ENCODE measurements at regions of chr2 and their contacts with region 1.

Region 1: DNA sequence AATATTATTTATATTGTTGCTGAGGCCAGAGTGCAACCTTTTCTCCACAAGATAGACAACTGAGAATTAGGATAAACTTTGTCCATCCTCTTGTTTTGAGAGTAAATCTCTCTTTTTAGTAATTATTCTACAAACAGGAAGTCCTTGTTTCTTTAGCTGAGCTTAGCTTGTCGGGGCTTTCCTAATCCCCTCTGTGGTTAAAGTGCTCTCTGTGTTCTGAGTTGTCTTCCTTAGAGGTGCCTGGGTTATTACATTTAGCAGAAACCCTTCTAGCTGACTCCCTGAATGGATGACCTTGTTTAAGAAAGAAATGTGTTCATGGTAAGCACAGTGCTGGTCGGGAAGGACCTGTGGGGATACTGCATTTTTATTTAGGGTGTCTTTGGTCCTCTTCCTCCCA is 12.7 kb downstream of the USP39 start:
- DNase-seq: no peak
- H3K4me3 ChIP-seq: no peak overlapping the region
- H3K27ac ChIP-seq: no peak overlapping the region
- H3K4me1 ChIP-seq: no peaks in the 10 kb centered on the region
- H3K27me3 ChIP-seq: no peaks in the 10 kb centered on the region
- CTCF ChIP-seq: no peak
- EP300 ChIP-seq: no peak
- POLR2A ChIP-seq: no peak
- RAD21 ChIP-seq: no peak

Region 2: GRCh38 chr2:85642725-85643124 is 14.1 kb after region 1 on chr2:
- CTCF ChIA-PET with region 1: interaction called, 34 read pairs
- POLR2A ChIA-PET with region 1: interaction called, 11 read pairs
- DNase-seq: no peak
- H3K4me3 ChIP-seq: no peak overlapping the region
- H3K27ac ChIP-seq: no peak overlapping the region
- H3K4me1 ChIP-seq: no peaks in the 10 kb centered on the region
- H3K27me3 ChIP-seq: no peaks in the 10 kb centered on the region
- CTCF ChIP-seq: no peak
- EP300 ChIP-seq: no peak
- POLR2A ChIP-seq: no peak
- RAD21 ChIP-seq: no peak

Region 3: DNA sequence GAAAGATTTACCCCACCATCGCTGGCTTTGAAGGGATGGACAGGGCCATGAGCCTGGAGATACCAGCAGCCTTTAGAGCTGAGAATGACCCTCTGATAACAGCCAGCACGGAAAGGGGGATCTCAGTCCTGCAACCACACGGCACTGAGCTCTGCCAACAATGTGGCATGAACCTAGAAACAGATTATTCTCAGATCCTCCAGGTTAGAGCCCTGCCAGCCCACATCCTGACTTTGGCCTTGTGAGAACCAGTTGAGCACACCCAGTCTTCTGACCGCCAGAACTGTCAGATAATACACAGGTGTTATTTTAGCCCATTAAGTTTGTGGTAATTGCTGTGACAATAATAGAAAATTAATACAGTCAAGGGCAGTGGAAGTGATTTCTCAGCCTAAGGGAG is 56.1 kb after region 1 on chr2:
- CTCF ChIA-PET with region 1: no interaction called
- POLR2A ChIA-PET with region 1: no interaction called
- DNase-seq: no peak
- H3K4me3 ChIP-seq: no peak overlapping the region
- H3K27ac ChIP-seq: no peak overlapping the region
- H3K4me1 ChIP-seq: no peaks in the 10 kb centered on the region
- H3K27me3 ChIP-seq: no peaks in the 10 kb centered on the region; a peak in 1 of 7 replicates
- CTCF ChIP-seq: no peak
- EP300 ChIP-seq: no peak
- POLR2A ChIP-seq: no peak
- RAD21 ChIP-seq: no peak

Measured in H1 (cell line).